CD8-positive, alpha-beta T cell (primary cell): ENCODE measurements at regions of chr19 and their contacts with region 1.

Region 1: GRCh38 chr19:11374433-11375142 is at the start of gene SWSAP1:
- DNase-seq: peak; percentile 91 to 100 (median 96)
- ATAC-seq: peak; percentile 88
- H3K4me3 ChIP-seq: peak within 1 kb of the TSS; percentile 73 to 80
- H3K4me3 Mint-ChIP-seq: no peak within 1 kb of the TSS
- H3K27ac ChIP-seq: peak within 1 kb of the TSS; percentile 83 to 98
- H3K27ac Mint-ChIP-seq: no peak within 1 kb of the TSS
- H3K4me1 ChIP-seq: peaks cover 28% of the 10 kb centered on the region
- H3K4me1 Mint-ChIP-seq: peaks cover 20% of the 10 kb centered on the region
- H3K27me3 ChIP-seq: no peaks in the 10 kb centered on the region
- H3K27me3 Mint-ChIP-seq: no peaks in the 10 kb centered on the region
- CTCF ChIP-seq: no peak
- total RNA-seq, gene SWSAP1: 2.2 to 2.4 TPM

Region 2: GRCh38 chr19:10870955-10871603 is 503.5 kb before region 1 on chr19 and contains the start of gene CARM1:
- CTCF ChIA-PET with region 1: no interaction called
- POLR2A ChIA-PET with region 1: no interaction called
- intact Hi-C with region 1: loop called in 1 of 2 experiments (anchors 2 kb)
- DNase-seq: peak; percentile 97 to 99 (median 99)
- ATAC-seq: peak; percentile 87
- H3K4me3 ChIP-seq: peak within 1 kb of the TSS; percentile 59 to 62
- H3K4me3 Mint-ChIP-seq: peak within 1 kb of the TSS; percentile 89
- H3K27ac ChIP-seq: peak within 1 kb of the TSS; percentile 37 to 76
- H3K27ac Mint-ChIP-seq: peak within 1 kb of the TSS; percentile 84
- H3K4me1 ChIP-seq: peaks cover 17% of the 10 kb centered on the region
- H3K4me1 Mint-ChIP-seq: peaks cover 19% of the 10 kb centered on the region
- H3K27me3 ChIP-seq: no peaks in the 10 kb centered on the region
- H3K27me3 Mint-ChIP-seq: no peaks in the 10 kb centered on the region
- CTCF ChIP-seq: no peak
- total RNA-seq, gene CARM1: 18.1 to 21.3 TPM

Region 3: DNA sequence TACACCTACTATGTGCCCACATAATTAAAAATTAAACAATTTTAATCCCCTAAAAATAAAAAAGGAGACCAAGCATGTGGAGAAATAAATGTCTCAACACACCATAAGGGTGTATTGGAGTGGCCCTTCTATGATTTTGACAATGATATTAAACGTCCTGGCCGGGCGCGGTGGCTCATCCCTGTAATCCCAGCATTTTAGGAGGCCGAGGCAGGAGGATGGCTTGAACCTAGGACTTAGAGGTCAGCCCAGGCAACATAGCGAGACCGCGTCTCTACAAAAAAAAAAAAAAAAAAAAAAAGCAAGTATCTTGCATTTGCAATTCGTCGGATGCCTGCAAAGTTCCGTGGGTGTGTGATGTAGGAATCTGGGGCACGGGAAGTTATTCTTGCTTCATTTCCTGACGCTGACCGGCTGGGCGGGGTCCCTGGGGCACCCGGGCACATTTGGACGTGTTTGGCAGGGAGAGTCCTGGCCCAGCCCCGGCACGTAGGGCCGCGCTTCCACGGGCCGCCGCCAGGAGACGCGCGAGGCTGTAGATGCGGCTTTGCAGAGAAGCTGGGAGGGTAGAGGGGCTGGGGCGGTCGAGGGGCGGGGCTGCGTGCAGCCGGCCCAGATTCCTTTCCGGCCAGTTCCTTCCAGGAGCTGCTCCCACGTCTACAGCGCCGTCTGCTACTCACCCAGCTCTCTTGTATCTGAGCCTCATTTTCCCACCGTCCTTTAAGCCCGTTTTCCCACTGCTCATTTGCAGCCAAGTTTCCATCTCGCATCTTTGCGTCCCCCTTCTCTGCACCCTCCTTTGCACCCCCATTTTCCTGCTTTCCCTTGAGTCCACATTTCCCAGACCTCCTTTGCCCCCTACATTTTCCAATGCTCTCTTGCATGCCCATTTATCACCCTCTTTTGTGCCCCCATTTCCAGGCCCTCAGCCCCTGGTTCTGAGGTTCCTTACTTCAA is 80.9 kb before region 1 on chr19:
- CTCF ChIA-PET with region 1: interaction called, 4 read pairs
- POLR2A ChIA-PET with region 1: interaction called, 3 read pairs
- intact Hi-C with region 1: loop called in 1 of 2 experiments (anchors 10 kb)
- DNase-seq: peak; percentile 68 to 84 (median 76)
- ATAC-seq: peak; percentile 99
- H3K4me3 ChIP-seq: no peak overlapping the region
- H3K4me3 Mint-ChIP-seq: no peak overlapping the region
- H3K27ac ChIP-seq: no peak overlapping the region
- H3K27ac Mint-ChIP-seq: no peak overlapping the region
- H3K4me1 ChIP-seq: peaks cover 8% of the 10 kb centered on the region
- H3K4me1 Mint-ChIP-seq: peaks cover 4% of the 10 kb centered on the region
- H3K27me3 ChIP-seq: peaks cover 0 to 12% of the 10 kb centered on the region in 2 experiments
- H3K27me3 Mint-ChIP-seq: peaks cover 24% of the 10 kb centered on the region
- CTCF ChIP-seq: peak; percentile 90

Region 4: DNA sequence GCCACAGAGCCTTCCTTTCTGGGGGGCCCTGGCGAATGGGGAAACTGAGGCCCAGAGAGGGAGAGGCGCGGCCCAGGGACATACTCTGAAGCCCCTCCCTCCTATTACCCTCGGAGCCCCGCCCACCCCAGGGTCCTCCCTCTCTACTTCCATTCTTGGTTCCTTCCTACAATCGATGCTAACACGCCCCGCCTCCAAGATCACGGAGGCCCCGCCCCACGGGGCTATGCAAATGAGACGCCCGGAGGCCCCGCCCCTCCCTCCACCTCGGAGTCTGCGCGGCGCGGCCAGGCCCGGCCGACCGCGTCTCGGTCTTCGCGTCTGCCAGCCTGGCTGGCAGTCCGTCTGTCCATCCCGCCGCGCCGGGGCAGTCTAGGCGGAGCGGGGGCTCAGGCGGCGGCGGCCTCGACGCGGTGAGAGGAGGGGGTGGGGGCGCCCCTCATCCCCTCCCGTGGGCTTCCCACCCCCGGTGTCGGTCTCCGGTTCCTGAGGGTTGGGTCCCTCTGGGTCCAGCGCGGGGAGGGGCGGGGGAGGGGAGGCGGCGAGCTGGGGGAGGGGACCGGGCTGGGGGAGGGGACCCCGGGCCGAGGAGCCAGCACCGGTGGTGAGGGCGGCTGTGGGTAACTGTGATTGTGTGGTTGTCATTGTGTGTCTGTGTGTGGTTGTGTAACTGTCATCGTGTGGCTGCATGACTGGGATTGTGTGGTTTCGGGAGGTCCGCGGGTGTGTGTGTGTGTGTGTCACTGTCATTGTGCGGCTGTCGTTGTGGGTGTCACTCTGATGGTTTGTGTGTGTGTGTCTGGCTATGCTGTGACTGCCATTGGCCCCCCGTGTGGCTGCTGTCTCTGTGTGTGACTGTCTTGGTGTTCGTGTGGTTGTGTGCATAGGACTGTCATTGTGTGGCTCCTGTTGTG is 19.2 kb before region 1 on chr19 and contains the start of gene PLPPR2:
- CTCF ChIA-PET with region 1: interaction called, 3 read pairs
- POLR2A ChIA-PET with region 1: no interaction called
- intact Hi-C with region 1: loop called in 1 of 2 experiments (anchors 1 kb)
- DNase-seq: peak; percentile 55 to 89 (median 80)
- ATAC-seq: peak; percentile 98
- H3K4me3 ChIP-seq: peak within 1 kb of the TSS; percentile 19 to 37
- H3K4me3 Mint-ChIP-seq: peak within 1 kb of the TSS; percentile 80
- H3K27ac ChIP-seq: no peak within 1 kb of the TSS
- H3K27ac Mint-ChIP-seq: no peak within 1 kb of the TSS
- H3K4me1 ChIP-seq: peaks cover 8% of the 10 kb centered on the region
- H3K4me1 Mint-ChIP-seq: peaks cover 9% of the 10 kb centered on the region
- H3K27me3 ChIP-seq: peaks cover 0 to 10% of the 10 kb centered on the region in 2 experiments
- H3K27me3 Mint-ChIP-seq: peaks cover 13% of the 10 kb centered on the region
- CTCF ChIP-seq: no peak
- total RNA-seq, gene PLPPR2: 6.0 to 6.2 TPM

Region 5: GRCh38 chr19:11528551-11529341 is 154.2 kb after region 1 on chr19 and contains the start of gene ECSIT:
- CTCF ChIA-PET with region 1: no interaction called
- POLR2A ChIA-PET with region 1: interaction called, 5 read pairs
- intact Hi-C with region 1: loop called in 1 of 2 experiments (anchors 1 kb)
- DNase-seq: peak; percentile 83 to 96 (median 91)
- ATAC-seq: peak; percentile 98
- H3K4me3 ChIP-seq: peak within 1 kb of the TSS; percentile 85 to 92
- H3K4me3 Mint-ChIP-seq: peak within 1 kb of the TSS; percentile 97
- H3K27ac ChIP-seq: peak within 1 kb of the TSS; percentile 62 to 89
- H3K27ac Mint-ChIP-seq: peak within 1 kb of the TSS; percentile 96
- H3K4me1 ChIP-seq: peaks cover 19% of the 10 kb centered on the region
- H3K4me1 Mint-ChIP-seq: peaks cover 16% of the 10 kb centered on the region
- H3K27me3 ChIP-seq: no peaks in the 10 kb centered on the region
- H3K27me3 Mint-ChIP-seq: no peaks in the 10 kb centered on the region
- CTCF ChIP-seq: no peak
- total RNA-seq, gene ECSIT: 31.1 to 32.4 TPM